Esophagus muscularis mucosa (tissue), 4 donors: ENCODE measurements at regions of chr9 and their contacts with region 1.

Region 1: GRCh38 chr9:27791311-27791710 is 218.0 kb upstream of the C9orf72 start:
- DNase-seq: no peak
- H3K4me3 ChIP-seq: no peak overlapping the region
- H3K27ac ChIP-seq: no peak overlapping the region
- H3K4me1 ChIP-seq: no peaks in the 10 kb centered on the region
- H3K27me3 ChIP-seq: no peaks in the 10 kb centered on the region
- CTCF ChIP-seq: no peak
- EP300 ChIP-seq: no peak
- POLR2A ChIP-seq: no peak

Region 2: GRCh38 chr9:26779072-26779471 is 1012.2 kb before region 1 on chr9:
- intact Hi-C with region 1: loop called (anchors 10 kb)
- DNase-seq: no peak
- H3K4me3 ChIP-seq: no peak overlapping the region
- H3K27ac ChIP-seq: no peak overlapping the region
- H3K4me1 ChIP-seq: no peaks in the 10 kb centered on the region
- H3K27me3 ChIP-seq: no peaks in the 10 kb centered on the region
- CTCF ChIP-seq: no peak
- EP300 ChIP-seq: no peak
- POLR2A ChIP-seq: no peak

Region 3: GRCh38 chr9:27489087-27489876 is 302.0 kb before region 1 on chr9:
- intact Hi-C with region 1: no loop called
- DNase-seq: no peak
- H3K4me3 ChIP-seq: no peak overlapping the region
- H3K27ac ChIP-seq: no peak overlapping the region
- H3K4me1 ChIP-seq: peaks cover 0 to 10% (median 3%) of the 10 kb centered on the region in 4 donors
- H3K27me3 ChIP-seq: no peaks in the 10 kb centered on the region
- CTCF ChIP-seq: no peak
- EP300 ChIP-seq: no peak
- POLR2A ChIP-seq: no peak

Region 4: DNA sequence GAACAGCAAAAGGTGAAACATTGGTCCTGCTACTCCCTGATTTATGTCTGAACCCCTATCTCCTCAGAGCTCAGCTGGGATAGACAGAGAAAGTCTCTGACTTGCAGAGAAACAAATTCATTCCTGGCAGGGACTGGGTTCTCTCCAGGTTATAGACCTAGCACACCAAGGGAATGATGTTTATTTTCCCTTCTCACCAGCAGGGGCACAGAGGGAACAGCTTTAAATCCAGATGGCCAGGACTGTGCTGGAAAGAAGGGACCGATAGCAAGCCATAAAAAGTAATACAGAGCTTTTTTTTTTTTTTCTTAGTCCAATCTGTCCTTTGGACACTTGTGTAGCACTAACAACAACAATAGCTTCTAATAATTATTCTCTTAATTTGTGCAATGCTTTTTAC is 76.9 kb before region 1 on chr9:
- intact Hi-C with region 1: no loop called
- DNase-seq: no peak
- H3K4me3 ChIP-seq: no peak overlapping the region
- H3K27ac ChIP-seq: no peak overlapping the region
- H3K4me1 ChIP-seq: no peaks in the 10 kb centered on the region
- H3K27me3 ChIP-seq: no peaks in the 10 kb centered on the region
- CTCF ChIP-seq: no peak
- EP300 ChIP-seq: no peak
- POLR2A ChIP-seq: no peak

Region 5: DNA sequence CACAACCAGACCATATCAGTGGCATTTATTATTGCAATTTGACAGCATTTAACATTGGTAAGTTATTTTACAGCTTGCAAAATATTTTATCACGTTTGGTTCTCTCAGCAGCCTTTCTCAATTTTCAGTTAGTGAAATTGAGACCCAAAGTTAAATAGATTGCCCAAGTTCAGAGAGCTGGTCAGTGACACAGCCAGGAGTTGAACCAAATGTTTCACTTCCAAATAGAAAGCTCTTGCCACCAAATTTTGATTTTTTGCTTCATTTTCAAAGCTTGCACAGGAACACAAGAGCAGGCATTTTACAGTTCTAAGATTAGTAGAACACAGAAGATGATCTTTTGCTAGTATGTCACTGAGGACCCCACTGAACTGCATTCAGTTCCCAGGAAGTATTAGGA is 53.5 kb after region 1 on chr9:
- intact Hi-C with region 1: loop called (anchors 5 kb)
- DNase-seq: no peak
- H3K4me3 ChIP-seq: no peak overlapping the region
- H3K27ac ChIP-seq: no peak overlapping the region
- H3K4me1 ChIP-seq: no peaks in the 10 kb centered on the region
- H3K27me3 ChIP-seq: no peaks in the 10 kb centered on the region
- CTCF ChIP-seq: no peak
- EP300 ChIP-seq: no peak
- POLR2A ChIP-seq: no peak